ENCODE measurements at regions of chr6 and their contacts with region 1.

Region 1: DNA sequence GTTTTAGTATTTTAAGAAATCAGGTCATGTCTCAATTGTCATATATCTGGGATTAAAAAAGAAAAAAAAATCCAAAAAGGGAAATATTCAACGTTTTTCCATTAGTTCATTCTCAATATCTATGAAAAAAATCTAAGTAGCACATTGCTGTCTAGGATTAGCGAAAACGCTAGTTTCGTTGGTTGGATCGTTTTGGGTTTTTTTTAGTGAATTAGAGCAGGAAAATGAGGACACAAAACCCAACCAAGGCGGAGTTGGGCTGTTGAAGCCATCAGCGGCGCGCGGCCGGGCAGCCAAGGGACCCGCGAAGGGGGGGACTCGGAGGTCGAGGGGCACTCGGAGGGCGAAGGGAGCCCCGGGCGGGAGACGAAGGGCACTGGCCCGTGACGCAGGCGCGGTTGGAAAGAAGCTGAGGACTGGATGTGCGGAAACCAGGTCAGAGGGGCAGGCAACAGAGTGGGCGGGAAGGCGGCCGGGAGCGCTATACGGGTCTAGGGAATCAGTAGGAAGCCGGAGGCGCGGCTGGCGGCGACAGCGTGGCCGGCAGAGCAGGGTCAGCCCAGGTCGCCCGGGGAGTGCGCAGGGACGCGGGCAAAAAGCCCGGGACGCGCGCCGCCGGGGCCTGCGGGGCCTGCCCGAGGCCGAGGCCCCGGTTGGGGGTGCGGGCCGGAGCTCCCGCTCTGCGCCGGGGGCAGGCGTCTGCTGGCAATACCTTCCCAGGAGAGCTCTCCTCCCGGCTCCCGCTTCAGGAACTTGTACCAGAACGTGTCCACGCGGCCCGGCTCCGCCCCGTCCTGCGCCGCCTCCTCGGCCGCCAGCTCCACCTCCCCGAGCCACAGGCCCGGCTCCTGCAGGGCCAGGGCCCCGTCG is 599 bp downstream of the EPM2A start:
- DNase-seq: peak; percentile 50 to 78 (median 64)
- ATAC-seq: peak; percentile 79
- H3K4me3 ChIP-seq: peak overlapping the region; percentile 65
- H3K4me3 Mint-ChIP-seq: peak overlapping the region; percentile 87 to 100 (median 98)
- H3K27ac ChIP-seq: peak overlapping the region; percentile 92
- H3K27ac Mint-ChIP-seq: peak overlapping the region; percentile 90 to 99 (median 97)
- H3K4me1 ChIP-seq: peaks cover 0 to 5% of the 10 kb centered on the region in 2 donors
- H3K4me1 Mint-ChIP-seq: peaks cover 0 to 29% (median 9%) of the 10 kb centered on the region in 7 donors
- H3K27me3 ChIP-seq: no peaks in the 10 kb centered on the region
- H3K27me3 Mint-ChIP-seq: no peaks in the 10 kb centered on the region

Region 2: GRCh38 chr6:144063744-144064401 is 1670.8 kb before region 1 on chr6:
- CTCF ChIA-PET with region 1: no interaction called
- POLR2A ChIA-PET with region 1: no interaction called
- intact Hi-C with region 1: loop called in 1 of 2 experiments (anchors 10 kb)
- DNase-seq: peak; percentile 84 to 91 (median 88)
- ATAC-seq: peak; percentile 96
- H3K4me3 ChIP-seq: peak overlapping the region; percentile 56
- H3K4me3 Mint-ChIP-seq: peak overlapping the region; percentile 87 to 94 (median 91)
- H3K27ac ChIP-seq: peak overlapping the region; percentile 85
- H3K27ac Mint-ChIP-seq: peak overlapping the region; percentile 83 to 97 (median 88)
- H3K4me1 ChIP-seq: peaks cover 0 to 12% of the 10 kb centered on the region in 2 donors
- H3K4me1 Mint-ChIP-seq: peaks cover 17 to 44% (median 29%) of the 10 kb centered on the region in 7 donors
- H3K27me3 ChIP-seq: no peaks in the 10 kb centered on the region
- H3K27me3 Mint-ChIP-seq: peaks cover 0 to 2% (median 0%) of the 10 kb centered on the region in 5 donors

Region 3: DNA sequence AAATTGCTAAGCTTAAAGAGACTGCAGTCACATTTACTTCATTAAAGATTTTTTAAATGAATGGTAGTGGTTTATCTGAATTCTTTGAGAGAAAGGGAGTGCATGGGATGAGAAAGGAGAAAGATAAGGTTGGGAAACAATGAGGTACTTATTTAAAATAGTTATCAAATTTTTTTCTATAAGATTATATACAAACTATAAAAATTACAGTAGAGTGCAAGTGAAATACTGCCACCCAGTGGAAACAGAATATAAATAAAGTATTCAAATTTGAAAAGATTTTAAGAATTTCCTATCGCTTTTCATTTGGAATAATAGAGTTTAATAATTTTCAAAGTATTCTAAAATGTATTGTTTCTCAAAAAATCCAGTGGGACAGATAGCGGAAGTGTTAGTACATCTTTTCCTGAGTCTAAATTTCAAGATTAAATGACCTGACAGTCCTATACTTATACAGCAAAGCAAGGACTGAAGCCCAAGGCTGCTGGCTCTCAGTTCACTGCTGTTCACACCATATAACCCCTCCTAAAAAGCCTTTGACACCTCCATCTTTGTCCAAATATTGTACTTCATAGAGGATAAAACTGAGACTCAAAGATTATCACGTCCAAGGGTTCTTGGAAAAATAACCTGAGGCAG is 30.5 kb before region 1 on chr6:
- CTCF ChIA-PET with region 1: no interaction called
- POLR2A ChIA-PET with region 1: no interaction called
- intact Hi-C with region 1: loop called in 1 of 2 experiments (anchors 2 kb)
- DNase-seq: peak in 3 of 9 donors; percentile 2 to 16 (median 6)
- ATAC-seq: no peak
- H3K4me3 ChIP-seq: no peak overlapping the region
- H3K4me3 Mint-ChIP-seq: no peak overlapping the region
- H3K27ac ChIP-seq: no peak overlapping the region
- H3K27ac Mint-ChIP-seq: no peak overlapping the region
- H3K4me1 ChIP-seq: no peaks in the 10 kb centered on the region
- H3K4me1 Mint-ChIP-seq: peaks cover 5 to 14% (median 6%) of the 10 kb centered on the region in 7 donors
- H3K27me3 ChIP-seq: no peaks in the 10 kb centered on the region
- H3K27me3 Mint-ChIP-seq: no peaks in the 10 kb centered on the region

Region 4: GRCh38 chr6:145887969-145888368 is 153.2 kb after region 1 on chr6:
- CTCF ChIA-PET with region 1: no interaction called
- POLR2A ChIA-PET with region 1: no interaction called
- intact Hi-C with region 1: loop called in 1 of 2 experiments (anchors 10 kb)
- DNase-seq: no peak
- ATAC-seq: no peak
- H3K4me3 ChIP-seq: no peak overlapping the region
- H3K4me3 Mint-ChIP-seq: no peak overlapping the region
- H3K27ac ChIP-seq: no peak overlapping the region
- H3K27ac Mint-ChIP-seq: no peak overlapping the region
- H3K4me1 ChIP-seq: no peaks in the 10 kb centered on the region
- H3K4me1 Mint-ChIP-seq: no peaks in the 10 kb centered on the region
- H3K27me3 ChIP-seq: no peaks in the 10 kb centered on the region
- H3K27me3 Mint-ChIP-seq: no peaks in the 10 kb centered on the region

Region 5: DNA sequence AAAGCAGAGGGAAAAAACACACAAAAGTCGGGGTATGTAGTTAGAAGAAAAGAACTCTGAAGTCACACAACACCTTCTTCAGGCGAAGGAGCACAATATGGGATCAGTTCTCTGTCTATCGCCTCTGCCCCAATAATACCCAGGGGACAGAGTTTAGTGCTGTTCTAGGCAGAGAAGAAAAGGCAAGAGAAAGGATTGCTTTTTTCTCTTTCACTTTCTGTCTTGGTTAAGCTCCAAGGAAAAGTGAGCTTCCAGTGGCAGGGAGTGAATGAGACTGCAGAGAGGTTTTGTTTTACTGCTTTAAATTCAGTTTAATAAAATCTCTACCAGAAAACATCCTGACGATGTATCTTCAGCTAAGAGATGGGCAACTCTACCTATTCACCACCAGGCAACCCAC is 1382.9 kb after region 1 on chr6:
- CTCF ChIA-PET with region 1: no interaction called
- POLR2A ChIA-PET with region 1: no interaction called
- intact Hi-C with region 1: loop called in 1 of 2 experiments (anchors 10 kb)
- DNase-seq: no peak
- ATAC-seq: no peak
- H3K4me3 ChIP-seq: no peak overlapping the region
- H3K4me3 Mint-ChIP-seq: no peak overlapping the region
- H3K27ac ChIP-seq: no peak overlapping the region
- H3K27ac Mint-ChIP-seq: no peak overlapping the region
- H3K4me1 ChIP-seq: no peaks in the 10 kb centered on the region
- H3K4me1 Mint-ChIP-seq: peaks cover 0 to 12% (median 1%) of the 10 kb centered on the region in 7 donors
- H3K27me3 ChIP-seq: no peaks in the 10 kb centered on the region
- H3K27me3 Mint-ChIP-seq: peaks cover 0 to 4% (median 0%) of the 10 kb centered on the region in 5 donors